Right cardiac atrium (tissue), 5 donors: ENCODE measurements at regions of chr9 and their contacts with region 1.

Region 1: DNA sequence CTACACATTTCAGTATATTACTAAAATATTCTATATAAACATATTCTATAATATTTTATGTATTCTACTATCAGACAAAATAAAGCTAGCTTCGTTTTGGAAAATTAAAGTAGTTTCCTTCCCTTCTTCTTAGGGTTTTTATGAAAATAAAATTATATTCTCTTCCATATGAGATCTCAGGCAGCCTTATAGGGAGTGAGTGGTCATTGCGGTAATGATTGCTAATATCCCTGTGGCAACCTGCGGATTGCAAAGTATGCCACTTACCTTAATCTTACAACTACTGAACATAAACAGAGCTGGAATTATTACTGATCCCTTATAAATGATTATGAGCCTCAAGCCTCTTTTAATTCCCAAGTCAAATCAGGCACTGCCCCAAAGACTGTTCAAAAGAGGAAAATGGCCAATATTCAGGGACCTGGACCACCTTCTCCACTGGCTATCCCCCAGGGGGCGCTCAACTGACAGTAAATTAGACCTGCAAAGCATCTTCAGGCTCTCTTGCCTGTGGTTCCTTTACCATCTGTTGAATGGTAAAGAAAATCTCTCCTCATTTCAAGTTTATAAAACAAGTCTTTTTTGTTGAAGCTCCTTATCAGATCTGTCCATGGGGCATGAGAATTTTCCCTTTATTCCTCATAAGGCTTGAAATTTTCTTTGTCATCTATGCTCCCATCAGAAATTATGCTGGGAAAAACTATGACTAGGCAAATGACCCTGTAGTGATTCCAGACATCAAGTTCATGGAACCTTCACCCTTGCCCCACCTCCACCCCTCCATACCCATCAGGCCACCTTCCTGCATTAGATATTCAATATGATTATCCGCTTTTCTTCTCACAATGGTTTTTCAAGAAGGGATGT is 163.9 kb downstream of the CEMIP2 start:
- DNase-seq: peak; percentile 70 to 84 (median 76)
- ATAC-seq: peak; percentile 52 to 86
- H3K4me3 ChIP-seq: no peak overlapping the region
- H3K27ac ChIP-seq: no peak overlapping the region
- H3K4me1 ChIP-seq: peaks cover 2% of the 10 kb centered on the region
- H3K27me3 ChIP-seq: no peaks in the 10 kb centered on the region

Region 2: DNA sequence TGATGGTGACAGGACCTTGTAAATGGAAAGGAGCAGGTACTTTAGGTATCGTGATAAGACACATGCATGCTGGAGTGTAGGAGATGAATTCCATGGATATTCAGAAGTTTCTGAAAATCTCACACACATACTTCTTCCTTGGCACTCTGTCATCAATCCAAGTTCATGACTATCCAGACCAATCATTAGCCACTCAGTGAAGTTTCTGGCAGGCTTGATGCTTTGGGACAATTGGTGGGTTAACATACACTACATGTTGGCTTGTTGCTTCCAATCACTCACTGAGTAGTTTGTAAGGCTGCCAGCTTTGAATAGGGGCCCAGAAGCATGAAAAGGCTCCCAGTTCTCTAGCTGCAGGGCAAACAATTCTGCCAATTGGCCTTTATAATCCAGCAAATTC is 16.3 kb after region 1 on chr9:
- intact Hi-C with region 1: loop called in 1 of 4 experiments (anchors 2 kb)
- DNase-seq: no peak
- ATAC-seq: no peak
- H3K4me3 ChIP-seq: no peak overlapping the region
- H3K27ac ChIP-seq: no peak overlapping the region
- H3K4me1 ChIP-seq: no peaks in the 10 kb centered on the region
- H3K27me3 ChIP-seq: no peaks in the 10 kb centered on the region

Region 3: GRCh38 chr9:71703172-71703872 is 98.9 kb after region 1 on chr9:
- intact Hi-C with region 1: loop called in 1 of 4 experiments (anchors 10 kb)
- DNase-seq: no peak
- ATAC-seq: peak in 1 of 2 donors; percentile 37
- H3K4me3 ChIP-seq: no peak overlapping the region
- H3K27ac ChIP-seq: no peak overlapping the region
- H3K4me1 ChIP-seq: peaks cover 3% of the 10 kb centered on the region
- H3K27me3 ChIP-seq: no peaks in the 10 kb centered on the region

Region 4: GRCh38 chr9:71768388-71769174 is 164.2 kb after region 1 on chr9 and contains the start of gene CEMIP2:
- intact Hi-C with region 1: loop called in 2 of 4 experiments (anchors 10 kb)
- DNase-seq: peak; percentile 91 to 97 (median 96)
- ATAC-seq: peak; percentile 91 to 94
- H3K4me3 ChIP-seq: peak within 1 kb of the TSS; percentile 80
- H3K27ac ChIP-seq: peak within 1 kb of the TSS; percentile 94
- H3K4me1 ChIP-seq: peaks cover 4% of the 10 kb centered on the region
- H3K27me3 ChIP-seq: no peaks in the 10 kb centered on the region
- total RNA-seq, gene CEMIP2: 26.4 to 66.9 (median 42.4) TPM

Region 5: GRCh38 chr9:71819115-71819739 is 214.8 kb after region 1 on chr9:
- intact Hi-C with region 1: loop called in 1 of 4 experiments (anchors 10 kb)
- DNase-seq: peak in 2 of 3 donors; percentile 28 to 56
- ATAC-seq: no peak
- H3K4me3 ChIP-seq: no peak overlapping the region
- H3K27ac ChIP-seq: no peak overlapping the region
- H3K4me1 ChIP-seq: peaks cover 2% of the 10 kb centered on the region
- H3K27me3 ChIP-seq: no peaks in the 10 kb centered on the region